ENCODE measurements at regions of chr7 and their contacts with region 1.

Region 1: GRCh38 chr7:91263384-91264045 is 718 bp upstream of the FZD1 start:
- DNase-seq: no peak
- H3K4me3 ChIP-seq: peak overlapping the region; percentile 72 to 88 (median 88)
- H3K27ac ChIP-seq: peak overlapping the region; percentile 94 to 98 (median 96)
- H3K4me1 ChIP-seq: peaks cover 14 to 39% (median 35%) of the 10 kb centered on the region in 4 donors
- H3K27me3 ChIP-seq: no peaks in the 10 kb centered on the region
- CTCF ChIP-seq: no peak
- EP300 ChIP-seq: no peak
- POLR2A ChIP-seq: no peak

Region 2: DNA sequence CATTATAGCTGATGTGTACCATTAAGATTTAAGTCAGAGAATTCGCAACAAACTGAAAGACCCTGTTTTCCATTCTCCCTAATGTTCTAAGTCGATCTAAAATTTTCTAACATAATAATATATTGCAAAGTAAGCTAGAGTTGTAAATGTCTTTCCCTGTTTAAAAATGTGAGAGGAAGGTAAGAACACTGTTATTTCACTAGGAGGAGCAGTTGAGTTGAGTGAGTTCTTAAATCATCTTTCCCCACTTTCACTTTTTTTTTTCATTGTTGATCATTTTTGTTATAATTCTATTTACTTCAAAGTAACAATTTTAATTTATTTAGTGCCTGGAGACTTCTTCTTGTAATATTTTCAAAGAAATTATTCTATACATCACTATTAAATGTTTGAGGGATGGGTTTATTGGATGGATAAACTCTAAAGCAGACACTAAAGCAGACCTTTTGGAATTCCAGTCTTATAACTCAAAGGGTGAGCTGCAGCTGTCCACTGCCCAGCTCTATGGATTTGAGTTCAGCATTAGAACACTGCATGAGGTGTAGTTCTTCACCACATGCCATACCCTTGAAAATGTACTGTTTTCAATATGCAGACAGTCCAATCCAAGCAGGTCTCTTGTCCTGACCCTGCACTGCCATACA is 180.5 kb before region 1 on chr7:
- intact Hi-C with region 1: loop called (anchors 2 kb)
- DNase-seq: no peak
- H3K4me3 ChIP-seq: peak overlapping the region in 2 of 4 donors; percentile 9 to 16
- H3K27ac ChIP-seq: peak overlapping the region; percentile 39 to 74 (median 59)
- H3K4me1 ChIP-seq: peaks cover 31 to 56% (median 35%) of the 10 kb centered on the region in 4 donors
- H3K27me3 ChIP-seq: no peaks in the 10 kb centered on the region
- CTCF ChIP-seq: peak; percentile 46 to 66 (median 63)
- EP300 ChIP-seq: no peak
- POLR2A ChIP-seq: no peak

Region 3: DNA sequence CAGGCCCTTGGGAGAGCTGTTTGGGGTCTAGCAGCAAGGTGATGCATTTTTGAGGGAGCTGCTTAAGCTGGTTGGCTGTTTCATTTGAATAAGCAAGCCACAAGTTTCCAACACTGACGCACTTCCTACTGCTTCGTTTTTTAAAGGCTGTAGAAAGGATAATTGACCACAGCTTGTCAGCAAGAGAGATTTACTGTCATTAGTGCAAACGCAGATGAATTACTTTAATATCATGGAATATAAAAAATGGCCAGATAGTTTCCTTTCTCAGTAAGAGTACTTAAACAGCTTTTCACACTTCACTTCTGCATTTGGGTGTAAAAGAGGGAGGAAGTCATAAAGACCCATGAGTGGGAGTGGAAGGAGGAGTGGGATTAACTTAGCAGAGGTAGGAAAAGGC is 62.2 kb after region 1 on chr7:
- intact Hi-C with region 1: no loop called
- DNase-seq: no peak
- H3K4me3 ChIP-seq: no peak overlapping the region
- H3K27ac ChIP-seq: no peak overlapping the region
- H3K4me1 ChIP-seq: peaks cover 0 to 7% (median 0%) of the 10 kb centered on the region in 4 donors
- H3K27me3 ChIP-seq: no peaks in the 10 kb centered on the region
- CTCF ChIP-seq: no peak
- EP300 ChIP-seq: no peak
- POLR2A ChIP-seq: no peak